Right lobe of liver (tissue), 6 donors: ENCODE measurements at regions of chr2 and their contacts with region 1.

Region 1: DNA sequence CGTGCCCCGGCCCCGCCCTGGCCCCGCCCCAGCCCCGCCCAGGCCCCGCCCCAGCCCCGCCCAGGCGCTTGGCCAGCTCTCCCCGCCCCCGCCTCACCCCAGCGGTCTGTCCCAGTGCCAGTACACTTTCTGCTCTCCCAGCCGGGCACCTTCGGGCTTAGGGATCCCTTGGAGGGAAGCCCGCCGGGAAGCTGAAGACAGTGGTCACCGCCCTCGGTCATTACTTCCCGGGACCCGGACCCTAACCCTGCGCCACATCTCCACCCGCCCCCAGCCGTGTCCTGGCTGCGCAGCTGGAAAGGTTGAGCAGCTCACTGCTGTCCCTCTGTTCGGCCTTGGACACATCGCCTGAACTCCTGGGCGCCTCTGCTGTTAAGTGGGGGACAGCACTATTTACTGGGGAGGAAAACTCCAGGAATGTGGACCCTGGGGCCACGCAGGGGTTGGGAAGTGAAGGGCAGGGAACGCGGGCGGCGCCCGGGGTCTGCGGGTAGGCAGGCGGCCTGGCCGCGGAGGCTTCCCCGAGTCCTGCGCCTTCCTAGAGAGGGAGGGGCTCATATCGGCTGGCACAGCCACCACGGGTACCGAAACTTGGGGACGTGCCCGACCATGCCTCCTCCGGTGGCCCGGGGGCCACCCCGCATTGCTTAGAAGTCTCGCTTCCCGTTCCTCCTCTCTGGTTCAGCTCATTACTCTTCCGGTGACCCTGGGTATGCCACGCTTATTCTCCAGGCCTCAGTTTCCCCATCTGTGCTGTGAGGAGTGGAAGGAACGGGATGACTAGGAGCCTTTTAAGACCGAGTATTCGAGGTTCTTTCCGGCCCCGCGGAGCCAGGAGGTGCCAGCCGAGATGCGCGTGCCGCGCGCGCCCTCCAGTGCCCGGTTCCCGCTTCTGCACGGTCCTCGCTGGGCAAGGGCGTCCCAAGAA is 121.0 kb downstream of the GYPC start:
- DNase-seq: peak; percentile 78 to 87 (median 86)
- ATAC-seq: peak; percentile 91 to 96 (median 92)
- H3K4me3 ChIP-seq: peak overlapping the region; percentile 48 to 58 (median 57)
- H3K27ac ChIP-seq: peak overlapping the region; percentile 36 to 57 (median 40)
- H3K4me1 ChIP-seq: no peaks in the 10 kb centered on the region
- H3K27me3 ChIP-seq: no peaks in the 10 kb centered on the region
- CTCF ChIP-seq: peak; percentile 90 to 95 (median 92)
- POLR2A ChIP-seq: no peak

Region 2: DNA sequence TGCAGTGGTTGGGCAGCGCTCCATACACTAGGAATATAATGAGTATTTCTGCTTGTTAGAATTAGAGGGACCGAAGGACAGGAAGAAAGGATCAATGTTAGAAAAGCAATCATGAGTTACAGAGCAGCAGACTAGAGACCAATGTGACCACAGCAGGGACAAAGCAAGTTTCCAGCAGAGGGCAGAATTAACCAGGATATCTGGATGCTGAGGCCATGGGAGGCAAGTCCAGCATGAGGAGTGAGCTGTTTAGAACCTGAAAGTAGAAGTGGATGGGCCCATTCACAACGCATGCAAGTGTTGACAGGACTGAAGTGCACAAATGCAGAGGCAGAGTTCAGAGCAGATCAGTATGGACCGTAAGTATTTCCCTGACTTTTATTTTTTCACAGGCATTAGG is 1031.4 kb before region 1 on chr2:
- intact Hi-C with region 1: loop called in 1 of 2 experiments (anchors 10 kb)
- DNase-seq: peak in 1 of 3 donors; percentile 55
- ATAC-seq: peak; percentile 85 to 97 (median 92)
- H3K4me3 ChIP-seq: no peak overlapping the region
- H3K27ac ChIP-seq: no peak overlapping the region
- H3K4me1 ChIP-seq: peaks cover 0 to 3% (median 0%) of the 10 kb centered on the region in 4 donors
- H3K27me3 ChIP-seq: no peaks in the 10 kb centered on the region
- CTCF ChIP-seq: peak; percentile 53 to 68 (median 55)
- POLR2A ChIP-seq: no peak

Region 3: DNA sequence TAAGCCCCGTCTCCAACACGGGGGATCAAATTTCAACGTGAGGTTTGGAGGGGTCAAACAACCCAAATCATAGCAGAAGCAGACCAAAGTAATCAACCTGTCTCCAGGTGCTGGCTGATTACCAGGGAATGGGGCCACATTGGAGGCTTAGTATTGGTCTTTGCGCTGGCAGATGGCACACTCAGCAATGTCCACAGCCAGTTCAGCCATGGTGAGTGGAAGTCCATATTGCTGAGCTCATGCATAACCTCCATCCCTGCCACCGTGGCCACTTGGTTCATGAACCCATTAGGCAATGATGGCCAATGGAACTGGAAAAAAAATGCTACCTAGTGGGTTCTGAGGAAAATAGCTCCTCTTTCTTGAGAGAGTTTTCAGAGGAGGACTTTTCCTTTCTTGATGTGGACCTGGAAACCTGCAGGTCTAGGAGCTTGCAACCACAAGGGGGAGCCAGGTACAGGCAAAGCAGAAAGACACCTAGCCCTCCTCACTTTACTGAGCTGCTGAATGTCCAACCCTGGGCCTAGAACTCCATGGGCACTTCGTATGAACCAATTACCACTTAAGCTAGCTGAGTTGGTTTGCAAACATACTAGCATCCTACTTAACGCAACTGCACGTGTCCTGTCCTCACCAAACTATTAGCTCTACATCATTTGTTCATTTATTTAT is 249.0 kb before region 1 on chr2:
- intact Hi-C with region 1: loop called in 1 of 2 experiments (anchors 10 kb)
- DNase-seq: peak; percentile 55 to 64 (median 64)
- ATAC-seq: peak; percentile 82 to 88 (median 84)
- H3K4me3 ChIP-seq: no peak overlapping the region
- H3K27ac ChIP-seq: no peak overlapping the region
- H3K4me1 ChIP-seq: no peaks in the 10 kb centered on the region
- H3K27me3 ChIP-seq: no peaks in the 10 kb centered on the region
- CTCF ChIP-seq: peak; percentile 47 to 62 (median 50)
- POLR2A ChIP-seq: no peak